ENCODE measurements at regions of chr13 and their contacts with region 1.

Region 1: DNA sequence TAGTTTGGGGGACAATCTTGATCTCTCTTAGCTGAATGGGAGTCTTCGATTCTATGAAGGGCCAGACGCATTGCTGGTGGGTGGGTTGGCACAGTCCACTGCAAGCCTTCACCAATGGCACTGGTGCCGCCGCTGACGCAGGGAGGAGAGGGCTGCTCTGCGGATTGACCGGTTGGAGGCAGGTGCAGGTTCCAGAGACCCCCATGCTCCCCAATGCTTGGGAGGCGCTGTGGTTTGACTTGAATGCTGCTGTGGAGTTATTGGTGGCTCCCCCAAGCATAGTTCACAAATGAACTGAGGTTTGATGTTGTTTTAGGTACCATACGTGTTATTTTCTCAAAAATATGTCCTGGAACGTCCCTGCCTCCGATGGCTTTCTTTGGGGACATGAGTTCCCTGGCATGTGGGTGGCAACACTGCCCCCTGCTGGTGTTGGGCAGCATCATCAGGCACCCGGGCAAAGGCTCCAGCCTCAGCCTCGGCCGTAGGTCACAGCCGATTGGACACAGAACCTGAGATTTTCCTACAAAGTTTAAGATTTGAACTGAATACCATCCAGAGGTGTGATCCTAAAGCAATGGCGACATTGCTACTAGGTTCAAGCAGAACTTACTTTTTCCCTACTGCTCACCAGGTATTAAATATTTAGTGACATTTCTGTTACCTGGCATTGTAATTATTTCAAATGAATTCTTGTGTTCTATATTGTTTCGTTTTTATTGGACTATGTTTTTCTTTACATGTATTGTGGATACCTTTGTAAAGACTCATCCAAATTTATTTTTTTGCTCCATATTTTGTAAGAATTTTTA is 95.5 kb downstream of the ANKRD10 start:
- DNase-seq: peak; percentile 58 to 87 (median 75)
- ATAC-seq: peak; percentile 79
- H3K4me3 ChIP-seq: no peak overlapping the region
- H3K4me3 Mint-ChIP-seq: no peak overlapping the region
- H3K27ac ChIP-seq: no peak overlapping the region
- H3K27ac Mint-ChIP-seq: no peak overlapping the region
- H3K4me1 ChIP-seq: no peaks in the 10 kb centered on the region
- H3K4me1 Mint-ChIP-seq: peaks cover 18% of the 10 kb centered on the region
- H3K27me3 ChIP-seq: no peaks in the 10 kb centered on the region
- H3K27me3 Mint-ChIP-seq: peaks cover 5% of the 10 kb centered on the region
- CTCF ChIP-seq: peak; percentile 98

Region 2: GRCh38 chr13:110225609-110226562 is 593.5 kb before region 1 on chr13:
- CTCF ChIA-PET with region 1: no interaction called
- POLR2A ChIA-PET with region 1: no interaction called
- intact Hi-C with region 1: loop called in 1 of 2 experiments (anchors 2 kb)
- DNase-seq: no peak
- ATAC-seq: no peak
- H3K4me3 ChIP-seq: no peak overlapping the region
- H3K4me3 Mint-ChIP-seq: no peak overlapping the region
- H3K27ac ChIP-seq: no peak overlapping the region
- H3K27ac Mint-ChIP-seq: no peak overlapping the region
- H3K4me1 ChIP-seq: no peaks in the 10 kb centered on the region
- H3K4me1 Mint-ChIP-seq: no peaks in the 10 kb centered on the region
- H3K27me3 ChIP-seq: no peaks in the 10 kb centered on the region
- H3K27me3 Mint-ChIP-seq: peaks cover 5% of the 10 kb centered on the region
- CTCF ChIP-seq: no peak

Region 3: GRCh38 chr13:110593430-110594130 is 225.8 kb before region 1 on chr13:
- CTCF ChIA-PET with region 1: interaction called, 13 read pairs
- POLR2A ChIA-PET with region 1: no interaction called
- intact Hi-C with region 1: loop called (anchors 1 kb)
- DNase-seq: peak in 2 of 9 experiments; percentile 47 to 64
- ATAC-seq: peak; percentile 57
- H3K4me3 ChIP-seq: no peak overlapping the region
- H3K4me3 Mint-ChIP-seq: no peak overlapping the region
- H3K27ac ChIP-seq: no peak overlapping the region
- H3K27ac Mint-ChIP-seq: no peak overlapping the region
- H3K4me1 ChIP-seq: no peaks in the 10 kb centered on the region
- H3K4me1 Mint-ChIP-seq: peaks cover 2% of the 10 kb centered on the region
- H3K27me3 ChIP-seq: no peaks in the 10 kb centered on the region
- H3K27me3 Mint-ChIP-seq: no peaks in the 10 kb centered on the region
- CTCF ChIP-seq: no peak

Region 4: DNA sequence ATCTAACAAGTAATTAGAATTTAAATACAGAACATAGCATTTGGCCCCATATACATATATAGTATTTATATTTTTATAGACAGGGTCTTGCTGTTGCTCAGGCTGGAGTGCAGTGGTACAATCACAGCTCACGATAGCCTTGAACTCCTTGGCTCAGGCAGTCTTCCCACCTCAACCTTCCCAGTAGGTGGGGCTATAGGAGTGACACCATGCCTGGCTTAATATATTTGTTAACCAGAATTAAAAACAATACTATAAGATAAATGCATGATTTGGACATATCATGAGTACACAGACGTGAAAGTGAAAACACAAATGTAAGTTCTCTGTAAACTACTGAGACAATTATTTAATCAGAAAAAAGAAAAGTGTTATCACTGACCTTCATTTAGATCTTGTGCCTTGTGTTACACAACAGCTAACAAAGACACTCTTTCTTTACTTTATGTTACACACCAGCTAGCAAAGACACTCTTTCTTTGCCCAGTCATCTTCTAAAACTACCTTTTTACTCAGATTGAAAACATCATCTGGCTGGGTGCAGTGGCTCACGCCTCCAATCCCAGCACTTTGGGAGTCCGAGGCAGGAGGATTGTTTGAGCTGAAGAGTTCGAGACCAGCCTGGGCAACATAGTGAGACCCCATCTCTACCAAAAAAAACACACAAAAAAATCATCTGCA is 136.1 kb before region 1 on chr13:
- CTCF ChIA-PET with region 1: interaction called, 10 read pairs
- POLR2A ChIA-PET with region 1: no interaction called
- intact Hi-C with region 1: loop called (anchors 1 kb)
- DNase-seq: peak in 3 of 9 experiments; percentile 32 to 59 (median 54)
- ATAC-seq: no peak
- H3K4me3 ChIP-seq: no peak overlapping the region
- H3K4me3 Mint-ChIP-seq: no peak overlapping the region
- H3K27ac ChIP-seq: no peak overlapping the region
- H3K27ac Mint-ChIP-seq: peak overlapping the region; percentile 32
- H3K4me1 ChIP-seq: no peaks in the 10 kb centered on the region
- H3K4me1 Mint-ChIP-seq: peaks cover 4% of the 10 kb centered on the region
- H3K27me3 ChIP-seq: no peaks in the 10 kb centered on the region
- H3K27me3 Mint-ChIP-seq: no peaks in the 10 kb centered on the region
- CTCF ChIP-seq: peak; percentile 19

Measured in CD8-positive, alpha-beta T cell (primary cell).